Vagina (tissue), 2 donors: ENCODE measurements at regions of chr13 and their contacts with region 1.

Region 1: DNA sequence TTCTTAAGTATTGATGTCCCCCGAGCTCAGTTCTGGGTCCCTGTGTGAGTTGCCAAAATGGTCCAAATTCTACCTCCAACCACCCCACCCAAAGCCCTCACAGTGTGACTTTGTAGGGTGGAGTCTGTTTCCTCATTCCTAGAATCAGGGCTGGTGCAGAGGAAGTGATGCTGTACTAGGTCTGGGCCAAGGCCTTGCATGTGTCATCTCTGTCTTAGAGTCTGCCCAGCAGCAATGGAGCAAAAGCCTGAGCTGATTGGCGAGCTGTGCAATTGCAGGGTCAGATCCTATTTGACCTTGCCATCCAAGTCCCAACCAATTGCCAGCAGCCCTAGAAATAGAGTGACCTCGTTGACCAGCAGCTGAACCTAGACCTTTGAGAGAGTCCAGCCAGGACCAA is 97.0 kb upstream of the ANKRD10 start:
- DNase-seq: no peak
- H3K4me3 ChIP-seq: no peak overlapping the region
- H3K27ac ChIP-seq: no peak overlapping the region
- H3K4me1 ChIP-seq: peaks cover 6% of the 10 kb centered on the region
- H3K27me3 ChIP-seq: no peaks in the 10 kb centered on the region
- CTCF ChIP-seq: no peak
- POLR2A ChIP-seq: no peak

Region 2: DNA sequence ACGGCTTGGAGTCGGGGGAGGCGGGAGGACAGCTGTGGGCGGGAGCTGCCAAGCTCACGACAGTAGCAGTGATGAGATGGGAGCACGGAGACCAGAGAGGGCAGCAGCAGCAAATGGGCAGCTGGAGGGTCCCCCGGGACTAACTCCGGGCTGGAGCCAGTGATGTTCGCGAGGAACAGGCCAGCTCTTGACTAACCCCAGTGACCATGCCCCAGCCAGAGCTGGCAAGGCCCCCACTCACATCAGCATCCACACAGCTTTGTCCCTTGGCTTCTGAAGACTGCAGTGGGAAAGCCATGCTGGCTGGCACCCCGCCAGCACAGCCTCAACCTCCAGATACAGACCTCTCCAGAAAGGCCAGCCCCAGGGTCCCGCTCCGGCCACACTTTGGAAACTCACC is 532.2 kb before region 1 on chr13:
- intact Hi-C with region 1: loop called (anchors 5 kb)
- DNase-seq: no peak
- H3K4me3 ChIP-seq: no peak overlapping the region
- H3K27ac ChIP-seq: no peak overlapping the region
- H3K4me1 ChIP-seq: no peaks in the 10 kb centered on the region
- H3K27me3 ChIP-seq: no peaks in the 10 kb centered on the region
- CTCF ChIP-seq: no peak
- POLR2A ChIP-seq: no peak

Region 3: DNA sequence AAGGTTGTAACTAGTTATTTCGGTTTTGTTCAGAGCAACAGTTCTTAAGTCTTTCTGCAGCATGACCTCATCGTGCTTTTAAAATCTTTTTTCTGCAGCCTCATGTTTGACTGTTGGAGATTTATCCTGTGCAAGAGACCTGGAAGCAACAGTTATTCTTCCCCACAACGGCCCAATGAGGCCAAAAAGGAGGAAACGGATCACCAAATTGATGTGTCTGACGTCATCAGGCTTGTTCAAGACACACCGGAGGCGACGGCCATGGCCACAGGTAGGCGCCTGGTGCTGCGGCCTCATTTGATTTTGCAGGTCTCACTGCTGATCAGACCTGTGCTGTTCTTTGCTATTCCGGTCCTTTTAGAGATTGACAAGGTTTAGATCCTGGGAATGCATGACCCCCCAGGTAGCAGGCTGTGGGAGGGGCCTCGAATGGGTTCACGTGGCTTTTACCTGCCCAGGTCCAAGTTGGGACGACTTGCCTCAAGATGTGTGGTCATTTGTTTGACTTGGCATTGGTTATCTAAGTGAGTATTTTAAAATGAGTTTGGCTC is 1890.3 kb after region 1 on chr13:
- intact Hi-C with region 1: no loop called
- DNase-seq: no peak
- H3K4me3 ChIP-seq: no peak overlapping the region
- H3K27ac ChIP-seq: no peak overlapping the region
- H3K4me1 ChIP-seq: no peaks in the 10 kb centered on the region
- H3K27me3 ChIP-seq: no peaks in the 10 kb centered on the region
- CTCF ChIP-seq: no peak
- POLR2A ChIP-seq: no peak